BJ (cell line): ENCODE measurements at regions of chr19 and their contacts with region 1.

Region 1: GRCh38 chr19:42149447-42150202 is 17.4 kb upstream of the POU2F2 start:
- DNase-seq: no peak
- H3K4me3 ChIP-seq: no peak overlapping the region
- H3K27me3 ChIP-seq: peaks cover 49% of the 10 kb centered on the region
- CTCF ChIP-seq: no peak

Region 2: DNA sequence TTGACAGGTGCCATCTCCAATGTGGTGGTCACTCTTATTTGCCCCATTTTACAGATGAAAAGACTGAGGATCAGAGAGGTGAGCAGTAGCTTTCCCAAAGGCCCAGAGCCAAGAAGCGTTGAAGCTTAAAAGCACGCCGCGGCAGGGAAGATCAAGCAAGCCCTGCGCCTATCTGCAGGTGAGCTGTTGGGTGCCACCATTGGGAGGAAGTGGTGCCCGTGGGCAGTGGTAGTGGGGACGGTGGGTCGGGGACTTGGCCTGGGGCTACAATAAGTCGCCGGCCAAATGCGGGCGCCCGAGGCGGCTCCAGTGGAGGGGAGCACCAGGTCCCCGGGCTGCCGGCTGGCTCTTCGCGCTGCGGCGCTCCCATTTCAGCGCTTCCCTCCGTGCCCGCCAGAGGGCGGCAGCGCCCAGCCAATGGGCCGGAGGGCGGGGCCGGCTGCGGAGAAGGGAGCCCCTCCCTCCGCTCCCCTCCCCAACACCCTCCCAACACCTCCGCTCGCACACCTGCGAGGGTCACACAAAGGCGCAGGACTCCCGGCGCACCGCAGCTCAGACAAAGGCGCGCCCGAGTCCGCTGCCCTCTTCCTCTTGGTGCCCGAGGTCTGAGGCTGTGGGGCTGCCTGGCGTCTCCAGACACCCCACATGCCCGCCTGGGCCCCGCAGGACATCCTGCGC is 16.6 kb before region 1 on chr19:
- CTCF ChIA-PET with region 1: no interaction called
- POLR2A ChIA-PET with region 1: interaction called, 21 read pairs
- DNase-seq: no peak
- H3K4me3 ChIP-seq: peak overlapping the region; percentile 33
- H3K27me3 ChIP-seq: peaks cover 2% of the 10 kb centered on the region; the same call in 1 of the 2 replicates
- CTCF ChIP-seq: peak; percentile 89

Region 3: GRCh38 chr19:42233106-42233505 is 83.5 kb after region 1 on chr19:
- CTCF ChIA-PET with region 1: no interaction called
- POLR2A ChIA-PET with region 1: no interaction called
- DNase-seq: no peak
- H3K4me3 ChIP-seq: no peak overlapping the region
- H3K27me3 ChIP-seq: no peaks in the 10 kb centered on the region
- CTCF ChIP-seq: no peak